ENCODE measurements at regions of chr13 and their contacts with region 1.

Region 1: GRCh38 chr13:32586080-32586900 is at the start of gene PDS5B:
- DNase-seq: peak; percentile 91 to 93
- ATAC-seq: peak; percentile 87 to 92
- H3K4me3 ChIP-seq: peak within 1 kb of the TSS; percentile 68 to 83 (median 74)
- H3K27ac ChIP-seq: peak within 1 kb of the TSS; percentile 89 to 94 (median 92)
- H3K4me1 ChIP-seq: peaks cover 27 to 33% of the 10 kb centered on the region in 2 donors
- H3K27me3 ChIP-seq: no peaks in the 10 kb centered on the region
- CTCF ChIP-seq: peak; percentile 80 to 99 (median 98)
- POLR2A ChIP-seq: peak; percentile 56 to 64
- total RNA-seq, gene PDS5B: 18.0 to 27.3 (median 21.2) TPM

Region 2: DNA sequence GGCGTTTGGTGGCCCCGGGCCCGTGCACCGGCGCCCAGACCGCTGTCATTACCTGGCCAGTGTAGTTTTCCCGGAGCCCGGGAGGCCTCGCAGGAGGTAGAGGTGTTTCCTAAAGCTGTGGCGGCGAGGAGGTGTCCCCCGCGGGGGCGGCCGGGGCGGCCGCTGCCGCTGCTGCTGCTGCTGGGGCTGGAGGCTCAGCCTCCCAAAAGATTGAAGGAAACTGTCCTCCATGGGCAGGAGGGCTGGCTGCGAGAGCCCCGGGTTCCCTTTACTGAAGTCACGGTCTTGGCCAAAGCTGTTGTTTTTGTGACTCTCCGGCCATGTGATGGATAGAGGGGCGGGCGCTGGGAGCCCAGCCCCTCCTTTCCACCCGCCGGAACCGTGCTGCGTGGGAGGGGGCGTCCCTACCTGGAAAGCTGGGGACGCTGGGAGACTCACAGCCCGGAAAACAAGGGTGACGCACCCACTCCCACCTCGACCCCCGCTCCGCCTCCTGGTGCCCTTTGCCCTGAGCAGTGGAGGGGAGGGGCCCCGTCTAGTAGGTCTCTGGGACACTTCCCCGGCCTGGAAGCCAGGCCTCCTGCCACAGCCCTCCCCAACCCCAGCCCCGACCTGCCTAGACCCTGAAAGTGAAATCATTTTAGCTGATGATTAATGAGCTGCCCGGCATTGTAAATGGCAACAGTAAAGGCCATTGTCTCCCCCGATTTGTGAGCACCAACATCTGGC is 158.3 kb before region 1 on chr13 and contains the start of gene N4BP2L1:
- in situ Hi-C with region 1: no loop called
- intact Hi-C with region 1: loop called (anchors 5 kb)
- DNase-seq: peak; percentile 59 to 63
- ATAC-seq: peak; percentile 67 to 77
- H3K4me3 ChIP-seq: peak within 1 kb of the TSS; percentile 65 to 96 (median 82)
- H3K27ac ChIP-seq: peak within 1 kb of the TSS; percentile 87 to 96 (median 90)
- H3K4me1 ChIP-seq: peaks cover 17 to 18% of the 10 kb centered on the region in 2 donors
- H3K27me3 ChIP-seq: no peaks in the 10 kb centered on the region
- CTCF ChIP-seq: no peak
- POLR2A ChIP-seq: peak; percentile 82 to 92
- total RNA-seq, gene N4BP2L1: 6.5 to 10.0 (median 7.2) TPM

Region 3: GRCh38 chr13:32639502-32640105 is 53.3 kb after region 1 on chr13:
- in situ Hi-C with region 1: loop called in 3 of 4 experiments (anchors 5 to 10 kb)
- intact Hi-C with region 1: loop called (anchors 1 kb)
- DNase-seq: peak; percentile 26 to 57
- ATAC-seq: peak; percentile 89 to 92
- H3K4me3 ChIP-seq: no peak overlapping the region
- H3K27ac ChIP-seq: no peak overlapping the region
- H3K4me1 ChIP-seq: peaks cover 3 to 24% of the 10 kb centered on the region in 2 donors
- H3K27me3 ChIP-seq: no peaks in the 10 kb centered on the region
- CTCF ChIP-seq: peak; percentile 68 to 85 (median 74)
- POLR2A ChIP-seq: no peak

Region 4: GRCh38 chr13:33017323-33017929 is 431.1 kb after region 1 on chr13:
- in situ Hi-C with region 1: loop called in 1 of 4 experiments (anchors 25 kb)
- intact Hi-C with region 1: loop called (anchors 5 kb)
- DNase-seq: peak; percentile 45 to 46
- ATAC-seq: peak; percentile 84 to 86
- H3K4me3 ChIP-seq: peak overlapping the region; percentile 56 to 61 (median 58)
- H3K27ac ChIP-seq: peak overlapping the region; percentile 65 to 74 (median 70)
- H3K4me1 ChIP-seq: no peaks in the 10 kb centered on the region
- H3K27me3 ChIP-seq: peaks cover 10 to 19% (median 12%) of the 10 kb centered on the region in 3 donors
- CTCF ChIP-seq: peak; percentile 41 to 58 (median 53)
- POLR2A ChIP-seq: peak; percentile 42 to 70

Region 5: DNA sequence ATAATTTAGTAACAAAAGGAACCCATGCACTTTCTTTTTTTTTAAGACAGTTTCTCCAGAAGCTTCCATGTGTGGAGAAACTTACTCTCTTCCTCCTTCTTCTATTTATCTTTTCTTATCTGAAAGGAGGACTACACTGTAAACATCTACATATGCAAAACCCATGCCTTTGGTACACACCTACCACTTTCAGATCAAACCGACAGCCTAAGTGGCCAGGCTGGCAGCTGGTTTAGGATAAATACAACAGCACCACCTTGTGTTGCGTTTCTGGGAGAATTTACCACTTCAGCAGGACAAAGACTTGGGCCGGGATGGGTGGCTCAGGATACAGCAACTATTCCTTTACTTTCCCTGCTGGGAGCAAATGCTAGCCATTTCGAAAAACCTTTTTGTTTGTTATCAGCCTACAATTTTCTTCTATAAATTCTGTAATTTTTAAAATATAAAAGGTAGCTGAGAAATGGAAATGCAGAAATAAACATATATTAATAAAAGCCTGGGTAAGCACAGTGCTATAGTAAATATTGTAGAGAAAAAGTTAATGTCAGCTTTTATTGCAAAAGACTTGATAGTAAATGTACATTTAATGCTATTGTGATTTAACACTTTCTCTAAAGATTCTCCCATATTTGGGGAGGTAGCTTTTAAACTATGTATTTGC is 1137.6 kb after region 1 on chr13:
- in situ Hi-C with region 1: loop called in 2 of 4 experiments (anchors 25 kb)
- intact Hi-C with region 1: loop called (anchors 5 kb)
- DNase-seq: peak; percentile 62
- ATAC-seq: peak; percentile 93 to 94
- H3K4me3 ChIP-seq: no peak overlapping the region
- H3K27ac ChIP-seq: peak overlapping the region in 2 of 4 donors; percentile 22 to 44
- H3K4me1 ChIP-seq: peaks cover 13 to 23% of the 10 kb centered on the region in 2 donors
- H3K27me3 ChIP-seq: no peaks in the 10 kb centered on the region
- CTCF ChIP-seq: peak; percentile 41 to 81 (median 58)
- POLR2A ChIP-seq: no peak

Measured in gastrocnemius medialis (tissue), 4 donors.